Psoas muscle (tissue), 8 donors: ENCODE measurements at regions of chr3 and their contacts with region 1.

Region 1: GRCh38 chr3:52154117-52155094 is at the start of gene POC1A:
- DNase-seq: peak; percentile 96 to 98
- ATAC-seq: peak; percentile 97 to 98 (median 97)
- H3K4me3 ChIP-seq: peak within 1 kb of the TSS; percentile 84
- H3K27ac ChIP-seq: peak within 1 kb of the TSS; percentile 92
- H3K4me1 ChIP-seq: peaks cover 10% of the 10 kb centered on the region
- H3K27me3 ChIP-seq: no peaks in the 10 kb centered on the region
- CTCF ChIP-seq: no peak
- total RNA-seq, gene POC1A: 1.1 to 3.2 (median 1.6) TPM

Region 2: DNA sequence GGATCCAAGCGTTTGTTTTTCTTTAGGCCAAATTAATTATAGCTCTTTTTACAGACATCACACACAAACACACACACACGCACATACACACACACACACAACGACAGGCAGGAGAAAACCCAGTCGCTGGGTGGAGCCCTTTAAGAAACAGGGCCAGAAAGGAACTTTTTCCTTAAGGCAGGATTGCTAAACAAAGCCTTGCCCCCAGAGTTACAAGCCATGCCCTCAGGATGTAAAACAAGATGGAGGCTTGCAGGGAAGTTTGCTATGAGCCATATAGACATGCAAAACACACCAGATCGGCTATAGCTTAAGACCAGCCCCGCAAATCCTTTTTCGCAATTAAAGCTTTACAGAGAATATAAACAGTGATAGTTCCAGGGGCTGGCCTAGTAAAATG is 309.3 kb before region 1 on chr3:
- intact Hi-C with region 1: no loop called
- DNase-seq: no peak
- ATAC-seq: no peak
- H3K4me3 ChIP-seq: no peak overlapping the region
- H3K27ac ChIP-seq: no peak overlapping the region
- H3K4me1 ChIP-seq: no peaks in the 10 kb centered on the region
- H3K27me3 ChIP-seq: peaks cover 0 to 8% (median 0%) of the 10 kb centered on the region in 3 donors
- CTCF ChIP-seq: no peak

Region 3: GRCh38 chr3:52197842-52198668 is 43.6 kb after region 1 on chr3 and contains the start of gene ALAS1:
- intact Hi-C with region 1: loop called in 1 of 2 experiments (anchors 5 kb)
- DNase-seq: peak; percentile 93 to 96
- ATAC-seq: peak; percentile 87 to 95 (median 88)
- H3K4me3 ChIP-seq: peak within 1 kb of the TSS; percentile 100
- H3K27ac ChIP-seq: peak within 1 kb of the TSS; percentile 87
- H3K4me1 ChIP-seq: peaks cover 36% of the 10 kb centered on the region
- H3K27me3 ChIP-seq: no peaks in the 10 kb centered on the region
- CTCF ChIP-seq: peak; percentile 23
- total RNA-seq, gene ALAS1: 50.1 to 89.4 (median 68.1) TPM

Region 4: DNA sequence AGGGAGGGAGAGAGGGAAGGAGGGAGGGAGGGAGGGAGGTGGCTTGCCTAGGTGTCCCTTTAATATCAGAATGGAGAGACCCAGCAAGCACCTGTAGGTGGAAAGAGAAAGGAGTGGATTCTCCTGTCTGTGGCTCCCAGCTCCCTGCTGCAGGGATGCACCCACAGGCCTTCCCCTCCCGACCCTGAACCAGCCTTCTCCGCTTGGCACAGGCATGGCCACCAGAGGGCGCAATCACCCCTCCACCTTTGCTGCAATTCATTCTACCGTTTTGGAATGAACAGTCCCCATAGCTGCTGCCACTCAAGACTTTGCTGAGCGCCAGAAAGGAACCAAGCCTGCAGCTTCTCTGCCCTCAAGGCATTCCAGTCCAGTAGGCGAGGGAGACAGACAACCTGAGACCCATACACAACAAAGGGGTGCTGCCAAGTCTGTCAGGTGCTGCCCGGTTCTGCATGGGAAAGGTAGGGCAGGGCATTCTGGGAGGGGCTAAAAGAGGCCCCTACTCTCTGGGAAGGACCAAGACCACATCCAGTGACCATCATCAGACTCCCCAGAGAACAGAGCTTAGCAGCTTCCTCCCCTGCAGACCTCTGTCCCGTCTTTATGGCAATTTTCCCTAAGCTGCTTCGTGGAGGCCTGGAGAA is 66.1 kb after region 1 on chr3:
- intact Hi-C with region 1: loop called in 1 of 2 experiments (anchors 1 kb)
- DNase-seq: peak; percentile 86 to 93
- ATAC-seq: peak; percentile 68 to 78 (median 70)
- H3K4me3 ChIP-seq: no peak overlapping the region
- H3K27ac ChIP-seq: no peak overlapping the region
- H3K4me1 ChIP-seq: peaks cover 25% of the 10 kb centered on the region
- H3K27me3 ChIP-seq: no peaks in the 10 kb centered on the region
- CTCF ChIP-seq: peak; percentile 87